ENCODE measurements at regions of chr9 and their contacts with region 1.

Region 1: DNA sequence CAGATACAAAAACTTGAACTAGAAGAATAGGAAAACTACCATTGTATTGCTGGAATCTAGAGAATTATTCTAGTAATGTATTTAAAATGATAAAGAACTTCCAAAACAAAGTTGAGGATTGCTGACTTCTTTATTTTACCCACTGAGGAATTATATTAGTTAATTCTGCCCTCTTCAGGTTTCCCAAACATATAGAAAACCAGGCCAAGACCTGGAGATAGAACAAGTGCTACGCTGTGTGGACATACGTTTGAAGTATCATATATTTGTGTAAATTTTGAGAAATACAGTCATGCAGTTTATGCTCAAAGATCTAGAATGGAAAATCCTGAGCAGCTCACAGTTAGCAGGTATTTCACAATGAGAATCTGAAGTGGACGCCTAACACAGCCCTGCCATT is 162.3 kb upstream of the CYLC2 start:
- DNase-seq: no peak
- ATAC-seq: no peak
- H3K4me3 ChIP-seq: no peak overlapping the region
- H3K27ac ChIP-seq: no peak overlapping the region
- H3K4me1 ChIP-seq: no peaks in the 10 kb centered on the region
- H3K27me3 ChIP-seq: no peaks in the 10 kb centered on the region
- CTCF ChIP-seq: no peak

Region 2: GRCh38 chr9:102875674-102876073 is 42.9 kb after region 1 on chr9:
- intact Hi-C with region 1: loop called (anchors 10 kb)
- DNase-seq: no peak
- ATAC-seq: no peak
- H3K4me3 ChIP-seq: no peak overlapping the region
- H3K27ac ChIP-seq: no peak overlapping the region
- H3K4me1 ChIP-seq: no peaks in the 10 kb centered on the region
- H3K27me3 ChIP-seq: no peaks in the 10 kb centered on the region
- CTCF ChIP-seq: no peak

Region 3: GRCh38 chr9:103068753-103069152 is 235.9 kb after region 1 on chr9:
- intact Hi-C with region 1: no loop called
- DNase-seq: no peak
- ATAC-seq: no peak
- H3K4me3 ChIP-seq: no peak overlapping the region
- H3K27ac ChIP-seq: no peak overlapping the region
- H3K4me1 ChIP-seq: no peaks in the 10 kb centered on the region
- H3K27me3 ChIP-seq: no peaks in the 10 kb centered on the region
- CTCF ChIP-seq: no peak